ENCODE measurements at regions of chr5 and their contacts with region 1.

Region 1: GRCh38 chr5:124847907-124848306 is 101.5 kb upstream of the ZNF608 start:
- DNase-seq: no peak
- ATAC-seq: no peak
- H3K4me3 Mint-ChIP-seq: no peak overlapping the region
- H3K27ac Mint-ChIP-seq: no peak overlapping the region
- H3K4me1 Mint-ChIP-seq: peaks cover 24% of the 10 kb centered on the region
- H3K27me3 Mint-ChIP-seq: no peaks in the 10 kb centered on the region
- CTCF ChIP-seq: no peak

Region 2: DNA sequence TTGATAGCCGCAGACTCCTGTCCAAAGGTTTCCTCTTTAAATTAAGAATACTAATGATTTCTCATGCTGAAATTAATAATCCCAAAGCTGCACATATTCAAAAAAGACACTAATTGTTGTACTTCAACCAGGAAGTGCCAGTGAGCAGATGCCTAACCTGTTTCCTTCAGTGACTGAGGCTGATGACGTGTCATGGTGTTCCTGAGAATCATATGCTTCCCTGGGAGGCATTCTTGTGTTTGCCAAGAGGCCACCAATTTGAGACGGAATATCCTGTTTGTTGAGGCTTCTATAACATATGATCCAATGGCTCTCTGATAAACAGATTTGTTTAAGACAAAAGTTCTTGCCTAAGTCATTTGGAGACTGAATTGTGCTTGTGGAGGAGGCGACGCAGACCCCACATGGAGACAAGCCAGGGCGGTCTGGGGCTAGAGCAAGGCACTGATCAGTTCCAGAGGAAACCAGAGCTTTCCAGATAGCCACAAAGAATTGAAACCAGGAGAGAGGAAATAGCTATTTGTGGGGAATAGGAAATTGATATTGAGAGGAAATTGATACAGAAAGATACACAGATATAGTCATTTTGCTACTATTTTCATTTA is 35.1 kb before region 1 on chr5:
- CTCF ChIA-PET with region 1: no interaction called
- POLR2A ChIA-PET with region 1: no interaction called
- intact Hi-C with region 1: no loop called
- DNase-seq: no peak
- ATAC-seq: no peak
- H3K4me3 Mint-ChIP-seq: no peak overlapping the region
- H3K27ac Mint-ChIP-seq: no peak overlapping the region
- H3K4me1 Mint-ChIP-seq: peaks cover 1% of the 10 kb centered on the region
- H3K27me3 Mint-ChIP-seq: no peaks in the 10 kb centered on the region
- CTCF ChIP-seq: no peak

Region 3: DNA sequence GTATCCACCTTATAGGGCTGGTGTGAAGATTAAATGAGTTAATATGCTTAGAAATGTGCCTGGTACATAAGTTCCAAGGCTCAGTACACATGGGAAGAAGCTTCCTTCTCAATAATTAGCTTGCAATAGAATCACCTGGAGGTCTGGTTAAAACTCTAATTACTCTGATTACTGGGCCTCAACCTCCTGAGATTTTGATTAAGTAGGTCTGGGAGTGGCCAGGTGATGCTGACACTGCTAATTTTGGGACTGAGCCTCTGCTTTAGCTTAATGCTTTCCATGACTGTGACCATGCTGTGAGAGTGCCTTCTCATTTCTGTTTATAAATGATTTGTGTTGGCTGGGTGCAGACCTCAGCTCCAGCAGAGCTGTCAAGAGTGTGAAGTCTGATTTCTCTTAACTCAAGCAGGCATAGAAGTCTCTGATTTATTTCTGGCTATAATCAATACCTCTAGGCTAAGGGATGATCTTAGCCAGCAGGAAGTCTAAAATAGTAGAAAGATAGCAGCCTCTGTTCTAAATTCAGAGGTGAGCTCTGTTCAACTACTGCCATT is 16.1 kb before region 1 on chr5:
- CTCF ChIA-PET with region 1: no interaction called
- POLR2A ChIA-PET with region 1: interaction called, 4 read pairs
- intact Hi-C with region 1: loop called (anchors 2 kb)
- DNase-seq: no peak
- ATAC-seq: no peak
- H3K4me3 Mint-ChIP-seq: no peak overlapping the region
- H3K27ac Mint-ChIP-seq: no peak overlapping the region
- H3K4me1 Mint-ChIP-seq: peaks cover 26% of the 10 kb centered on the region
- H3K27me3 Mint-ChIP-seq: no peaks in the 10 kb centered on the region
- CTCF ChIP-seq: no peak

Region 4: DNA sequence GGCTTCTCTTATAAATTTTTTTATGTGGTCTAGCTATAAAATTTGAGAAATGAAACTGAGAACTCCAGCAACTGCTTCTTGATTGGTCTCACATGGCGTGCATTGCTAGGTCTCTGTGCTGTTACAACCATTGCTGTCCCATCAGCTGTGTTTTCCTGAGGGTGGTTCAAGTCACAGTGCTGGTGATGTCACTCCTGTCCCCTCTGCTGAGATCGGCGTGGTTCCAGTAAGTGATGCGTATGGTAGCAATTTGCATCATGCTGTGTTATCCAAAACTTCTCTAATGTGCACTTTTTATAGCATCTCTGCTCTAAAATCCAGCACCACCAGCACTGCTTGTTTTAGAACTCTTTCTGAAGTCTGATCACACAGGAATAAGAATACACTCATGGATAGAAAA is 11.1 kb after region 1 on chr5:
- CTCF ChIA-PET with region 1: no interaction called
- POLR2A ChIA-PET with region 1: interaction called, 12 read pairs
- intact Hi-C with region 1: no loop called
- DNase-seq: peak; percentile 26
- ATAC-seq: peak; percentile 95
- H3K4me3 Mint-ChIP-seq: no peak overlapping the region
- H3K27ac Mint-ChIP-seq: peak overlapping the region; percentile 46
- H3K4me1 Mint-ChIP-seq: peaks cover 17% of the 10 kb centered on the region
- H3K27me3 Mint-ChIP-seq: no peaks in the 10 kb centered on the region
- CTCF ChIP-seq: no peak

Measured in activated B cell treated with CpG ODN at 0.5 μM for 24 hours (primary cell).